Mammary epithelial cell (primary cell): ENCODE measurements at regions of chr11 and their contacts with region 1.

Region 1: DNA sequence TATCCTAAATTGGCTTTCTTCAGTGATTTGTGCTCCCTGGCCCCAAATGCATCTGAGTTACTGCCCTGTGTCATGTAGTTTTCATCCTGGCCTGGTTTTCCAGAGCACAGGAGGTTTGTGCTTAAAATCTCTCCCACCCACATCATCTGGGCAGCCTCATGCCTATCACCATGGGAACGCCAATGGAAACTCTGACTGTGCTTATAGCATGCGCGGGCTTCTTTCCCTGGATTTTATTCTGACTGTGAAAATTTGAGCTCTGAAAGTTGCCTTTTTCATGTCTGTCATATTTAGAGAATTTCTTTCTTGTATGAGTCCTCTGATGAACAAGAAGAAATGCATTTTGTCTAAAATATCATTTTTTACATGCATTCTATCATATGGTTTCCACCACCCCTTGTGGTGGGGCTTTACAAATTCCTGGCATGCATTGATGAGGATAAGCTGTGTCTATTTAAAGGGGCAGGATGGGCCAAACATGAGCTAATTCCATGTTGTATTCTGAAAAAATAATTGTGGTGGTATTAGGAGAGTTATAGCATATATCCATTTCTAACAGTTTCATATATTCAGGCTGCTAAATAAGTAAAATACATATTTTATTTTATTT is 55.1 kb downstream of the IRAG1 start:
- DNase-seq: no peak
- H3K4me3 ChIP-seq: no peak overlapping the region
- H3K27ac ChIP-seq: no peak overlapping the region
- H3K4me1 ChIP-seq: no peaks in the 10 kb centered on the region
- H3K27me3 ChIP-seq: no peaks in the 10 kb centered on the region
- CTCF ChIP-seq: no peak

Region 2: GRCh38 chr11:10564696-10565318 is 73.6 kb before region 1 on chr11:
- CTCF ChIA-PET with region 1: interaction called, 21 read pairs
- dilution Hi-C with region 1: no loop called
- in situ Hi-C with region 1: no loop called
- intact Hi-C with region 1: no loop called
- DNase-seq: no peak
- H3K4me3 ChIP-seq: no peak overlapping the region
- H3K27ac ChIP-seq: no peak overlapping the region
- H3K4me1 ChIP-seq: no peaks in the 10 kb centered on the region
- H3K27me3 ChIP-seq: no peaks in the 10 kb centered on the region
- CTCF ChIP-seq: peak; percentile 31 to 58

Region 3: DNA sequence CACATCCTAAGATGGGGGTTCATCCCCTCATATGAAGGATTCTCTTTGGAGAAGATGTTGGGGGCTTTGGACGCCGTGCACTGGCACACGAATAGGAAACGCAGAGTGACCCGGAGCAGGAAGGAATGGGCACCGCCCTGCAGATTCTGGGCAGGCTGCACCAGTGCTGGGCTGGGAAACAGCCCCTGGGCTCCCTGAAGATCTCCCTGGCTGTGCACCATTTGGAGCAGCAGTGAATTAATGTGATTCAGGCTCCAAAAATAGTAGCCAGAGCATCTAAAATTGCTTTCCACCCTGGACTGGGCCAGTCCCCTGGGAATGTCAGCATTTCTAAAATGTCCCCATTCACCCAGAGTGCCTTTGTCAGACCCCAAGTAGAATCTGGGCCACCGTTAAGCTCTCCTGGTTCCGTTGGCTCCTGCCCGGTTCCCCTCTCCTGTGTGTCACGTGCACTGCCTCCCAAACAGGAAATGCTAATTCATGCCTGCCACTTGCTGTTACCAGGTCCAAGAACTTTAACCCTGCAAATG is 36.6 kb after region 1 on chr11:
- CTCF ChIA-PET with region 1: no interaction called
- dilution Hi-C with region 1: loop called (anchors 5 kb)
- in situ Hi-C with region 1: no loop called
- intact Hi-C with region 1: no loop called
- DNase-seq: no peak
- H3K4me3 ChIP-seq: no peak overlapping the region
- H3K27ac ChIP-seq: no peak overlapping the region
- H3K4me1 ChIP-seq: no peaks in the 10 kb centered on the region
- H3K27me3 ChIP-seq: no peaks in the 10 kb centered on the region
- CTCF ChIP-seq: no peak